ENCODE measurements at regions of chr2 and their contacts with region 1.

Region 1: GRCh38 chr2:203484266-203485112 is 50.6 kb downstream of the RAPH1 start:
- DNase-seq: peak; percentile 10 to 79 (median 55)
- ATAC-seq: peak; percentile 92 to 98
- H3K4me3 Mint-ChIP-seq: peak overlapping the region in 2 of 10 donors; percentile 14 to 16
- H3K27ac Mint-ChIP-seq: peak overlapping the region in 5 of 10 donors; percentile 0 to 80 (median 6)
- H3K4me1 Mint-ChIP-seq: peaks cover 3 to 8% (median 6%) of the 10 kb centered on the region in 4 donors
- H3K27me3 Mint-ChIP-seq: no peaks in the 10 kb centered on the region

Region 2: GRCh38 chr2:203470371-203470770 is 14.1 kb before region 1 on chr2:
- POLR2A ChIA-PET with region 1: no interaction called
- DNase-seq: no peak
- ATAC-seq: no peak
- H3K4me3 Mint-ChIP-seq: no peak overlapping the region
- H3K27ac Mint-ChIP-seq: no peak overlapping the region
- H3K4me1 Mint-ChIP-seq: no peaks in the 10 kb centered on the region
- H3K27me3 Mint-ChIP-seq: peaks cover 0 to 4% (median 0%) of the 10 kb centered on the region in 5 donors

Region 3: GRCh38 chr2:203814661-203815540 is 330.4 kb after region 1 on chr2:
- POLR2A ChIA-PET with region 1: interaction called, 10 read pairs
- DNase-seq: peak in 9 of 10 donors; percentile 15 to 77 (median 42)
- ATAC-seq: peak; percentile 90 to 91
- H3K4me3 Mint-ChIP-seq: peak overlapping the region; percentile 54 to 84 (median 76)
- H3K27ac Mint-ChIP-seq: peak overlapping the region in 9 of 10 donors; percentile 12 to 92 (median 79)
- H3K4me1 Mint-ChIP-seq: peaks cover 9 to 47% (median 43%) of the 10 kb centered on the region in 4 donors
- H3K27me3 Mint-ChIP-seq: peaks cover 0 to 11% (median 0%) of the 10 kb centered on the region in 5 donors